CD8-positive, alpha-beta T cell (primary cell): ENCODE measurements at regions of chr15 and their contacts with region 1.

Region 1: GRCh38 chr15:50908210-50909009 is at the start of gene AP4E1:
- DNase-seq: peak; percentile 89 to 97 (median 95)
- ATAC-seq: peak; percentile 52
- H3K4me3 ChIP-seq: peak within 1 kb of the TSS; percentile 74 to 85
- H3K4me3 Mint-ChIP-seq: peak within 1 kb of the TSS; percentile 89
- H3K27ac ChIP-seq: peak within 1 kb of the TSS; percentile 85 to 95
- H3K27ac Mint-ChIP-seq: peak within 1 kb of the TSS; percentile 99
- H3K4me1 ChIP-seq: peaks cover 11% of the 10 kb centered on the region
- H3K4me1 Mint-ChIP-seq: peaks cover 35% of the 10 kb centered on the region
- H3K27me3 ChIP-seq: no peaks in the 10 kb centered on the region
- H3K27me3 Mint-ChIP-seq: no peaks in the 10 kb centered on the region
- CTCF ChIP-seq: peak; percentile 94
- total RNA-seq, gene AP4E1: 6.8 to 8.1 TPM

Region 2: DNA sequence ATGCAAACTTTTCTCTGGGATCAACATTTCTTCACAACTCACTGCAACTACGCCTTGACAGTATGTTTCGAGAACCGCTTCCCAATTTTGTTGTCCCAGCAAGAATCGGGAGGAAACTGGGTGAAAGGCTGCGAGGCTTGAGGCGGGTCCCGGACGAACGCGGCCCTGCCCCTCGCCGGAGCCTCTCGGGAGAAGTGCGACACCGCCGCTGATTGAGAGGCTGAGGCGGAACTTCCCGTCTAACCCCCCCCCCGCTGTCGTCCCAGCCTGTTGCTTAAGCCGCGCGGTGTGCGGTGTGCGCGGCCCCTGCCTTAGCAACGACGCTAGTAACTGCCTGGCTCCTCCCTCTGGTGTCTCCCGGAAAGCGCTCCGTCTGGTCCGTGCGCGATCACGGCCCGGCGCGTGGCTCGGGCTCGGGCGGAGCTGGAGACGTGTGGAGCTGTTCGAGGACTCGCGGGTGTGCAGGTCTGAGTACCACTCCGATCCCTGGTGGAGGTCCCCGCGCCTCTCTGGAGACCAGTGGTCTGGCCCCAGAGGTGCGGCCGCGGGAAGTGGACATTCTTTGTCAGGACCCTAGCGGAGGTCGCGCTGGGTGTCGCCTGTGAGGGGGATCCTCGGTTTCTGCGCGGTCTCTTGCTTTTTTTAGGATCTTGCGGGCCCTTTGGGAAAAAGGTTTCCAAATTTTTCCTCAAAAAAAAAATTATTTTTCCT is 1287.6 kb before region 1 on chr15 and contains the starts of genes DTWD1 and FAM227B:
- CTCF ChIA-PET with region 1: no interaction called
- POLR2A ChIA-PET with region 1: no interaction called
- intact Hi-C with region 1: loop called (anchors 1 to 10 kb)
- DNase-seq: peak; percentile 85 to 98 (median 93)
- ATAC-seq: peak; percentile 97
- H3K4me3 ChIP-seq: peak within 1 kb of the TSS; percentile 71 to 83
- H3K4me3 Mint-ChIP-seq: peak within 1 kb of the TSS; percentile 94
- H3K27ac ChIP-seq: peak within 1 kb of the TSS; percentile 86 to 89
- H3K27ac Mint-ChIP-seq: peak within 1 kb of the TSS; percentile 99
- H3K4me1 ChIP-seq: peaks cover 28% of the 10 kb centered on the region
- H3K4me1 Mint-ChIP-seq: peaks cover 54% of the 10 kb centered on the region
- H3K27me3 ChIP-seq: no peaks in the 10 kb centered on the region
- H3K27me3 Mint-ChIP-seq: no peaks in the 10 kb centered on the region
- CTCF ChIP-seq: no peak
- total RNA-seq, gene DTWD1: 8.7 to 9.7 TPM
- total RNA-seq, gene FAM227B: 3.3 to 4.3 TPM

Region 3: DNA sequence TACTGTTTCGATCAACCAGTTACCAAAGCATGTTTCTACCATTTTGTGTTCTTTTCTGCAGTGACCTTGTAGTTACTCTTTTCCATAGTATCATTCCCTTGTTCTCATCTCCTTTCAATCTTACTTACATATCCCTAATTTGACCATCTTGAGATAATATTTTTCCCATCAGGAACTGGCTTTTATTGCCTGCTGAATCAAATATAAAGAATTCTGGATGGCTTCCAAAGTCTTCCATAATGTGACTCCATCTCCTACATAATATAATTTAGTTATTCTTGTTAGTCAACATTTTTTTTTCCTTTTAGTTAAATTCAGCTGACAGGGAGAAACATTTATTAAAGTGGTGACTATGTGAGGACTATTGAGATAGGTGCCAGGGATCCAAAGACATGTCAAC is 477.2 kb before region 1 on chr15:
- CTCF ChIA-PET with region 1: no interaction called
- POLR2A ChIA-PET with region 1: no interaction called
- intact Hi-C with region 1: no loop called
- DNase-seq: no peak
- ATAC-seq: no peak
- H3K4me3 ChIP-seq: no peak overlapping the region
- H3K4me3 Mint-ChIP-seq: no peak overlapping the region
- H3K27ac ChIP-seq: no peak overlapping the region
- H3K27ac Mint-ChIP-seq: no peak overlapping the region
- H3K4me1 ChIP-seq: peaks cover 19% of the 10 kb centered on the region
- H3K4me1 Mint-ChIP-seq: peaks cover 67% of the 10 kb centered on the region
- H3K27me3 ChIP-seq: no peaks in the 10 kb centered on the region
- H3K27me3 Mint-ChIP-seq: no peaks in the 10 kb centered on the region
- CTCF ChIP-seq: no peak

Region 4: DNA sequence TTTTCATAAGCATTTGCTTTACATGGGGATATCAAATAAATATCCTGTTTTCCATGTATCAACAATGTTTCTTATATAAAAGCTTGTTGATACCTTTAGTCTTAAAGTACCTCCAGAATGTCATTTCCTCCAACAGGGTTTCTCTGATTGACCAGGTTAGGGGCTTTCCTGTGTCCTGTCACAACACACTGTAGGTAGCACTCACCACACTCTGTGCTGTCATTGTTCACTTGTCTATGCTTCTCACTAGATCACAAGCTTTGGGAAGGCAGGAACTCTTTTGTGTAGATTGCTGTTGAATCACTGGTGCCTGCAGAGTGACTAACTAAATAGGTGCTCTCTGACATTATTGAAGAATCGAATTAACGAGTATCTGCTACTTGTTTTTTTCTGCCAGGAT is 411.7 kb before region 1 on chr15:
- CTCF ChIA-PET with region 1: no interaction called
- POLR2A ChIA-PET with region 1: no interaction called
- intact Hi-C with region 1: loop called in 1 of 2 experiments (anchors 10 kb)
- DNase-seq: no peak
- ATAC-seq: no peak
- H3K4me3 ChIP-seq: no peak overlapping the region
- H3K4me3 Mint-ChIP-seq: no peak overlapping the region
- H3K27ac ChIP-seq: peak overlapping the region in 1 of 2 experiments; percentile 25
- H3K27ac Mint-ChIP-seq: peak overlapping the region; percentile 46
- H3K4me1 ChIP-seq: no peaks in the 10 kb centered on the region
- H3K4me1 Mint-ChIP-seq: no peaks in the 10 kb centered on the region
- H3K27me3 ChIP-seq: no peaks in the 10 kb centered on the region
- H3K27me3 Mint-ChIP-seq: no peaks in the 10 kb centered on the region
- CTCF ChIP-seq: no peak

Region 5: GRCh38 chr15:50686468-50687301 is 221.7 kb before region 1 on chr15 and contains the start of gene TRPM7:
- CTCF ChIA-PET with region 1: interaction called, 3 read pairs
- POLR2A ChIA-PET with region 1: no interaction called
- intact Hi-C with region 1: loop called (anchors 1 kb)
- DNase-seq: peak; percentile 74 to 96 (median 87)
- ATAC-seq: peak; percentile 74
- H3K4me3 ChIP-seq: peak within 1 kb of the TSS; percentile 78 to 88
- H3K4me3 Mint-ChIP-seq: peak within 1 kb of the TSS; percentile 99
- H3K27ac ChIP-seq: peak within 1 kb of the TSS; percentile 90 to 93
- H3K27ac Mint-ChIP-seq: peak within 1 kb of the TSS; percentile 99
- H3K4me1 ChIP-seq: peaks cover 21% of the 10 kb centered on the region
- H3K4me1 Mint-ChIP-seq: peaks cover 50% of the 10 kb centered on the region
- H3K27me3 ChIP-seq: no peaks in the 10 kb centered on the region
- H3K27me3 Mint-ChIP-seq: no peaks in the 10 kb centered on the region
- CTCF ChIP-seq: no peak
- total RNA-seq, gene TRPM7: 29.5 to 30.3 TPM

Region 6: GRCh38 chr15:50884583-50884982 is 23.8 kb before region 1 on chr15:
- CTCF ChIA-PET with region 1: interaction called, 8 read pairs
- POLR2A ChIA-PET with region 1: interaction called, 5 read pairs
- intact Hi-C with region 1: loop called (anchors 1 kb)
- DNase-seq: no peak
- ATAC-seq: no peak
- H3K4me3 ChIP-seq: no peak overlapping the region
- H3K4me3 Mint-ChIP-seq: no peak overlapping the region
- H3K27ac ChIP-seq: no peak overlapping the region
- H3K27ac Mint-ChIP-seq: no peak overlapping the region
- H3K4me1 ChIP-seq: peaks cover 5% of the 10 kb centered on the region
- H3K4me1 Mint-ChIP-seq: peaks cover 9% of the 10 kb centered on the region
- H3K27me3 ChIP-seq: no peaks in the 10 kb centered on the region
- H3K27me3 Mint-ChIP-seq: no peaks in the 10 kb centered on the region
- CTCF ChIP-seq: no peak